Activated B cell treated with CpG ODN at 0.5 μM for 24 hours (primary cell): ENCODE measurements at regions of chr9 and their contacts with region 1.

Region 1: GRCh38 chr9:2066312-2067273 is 51.4 kb downstream of the SMARCA2 start:
- DNase-seq: no peak
- ATAC-seq: no peak
- H3K4me3 Mint-ChIP-seq: no peak overlapping the region
- H3K27ac Mint-ChIP-seq: no peak overlapping the region
- H3K4me1 Mint-ChIP-seq: no peaks in the 10 kb centered on the region
- H3K27me3 Mint-ChIP-seq: no peaks in the 10 kb centered on the region
- CTCF ChIP-seq: no peak

Region 2: DNA sequence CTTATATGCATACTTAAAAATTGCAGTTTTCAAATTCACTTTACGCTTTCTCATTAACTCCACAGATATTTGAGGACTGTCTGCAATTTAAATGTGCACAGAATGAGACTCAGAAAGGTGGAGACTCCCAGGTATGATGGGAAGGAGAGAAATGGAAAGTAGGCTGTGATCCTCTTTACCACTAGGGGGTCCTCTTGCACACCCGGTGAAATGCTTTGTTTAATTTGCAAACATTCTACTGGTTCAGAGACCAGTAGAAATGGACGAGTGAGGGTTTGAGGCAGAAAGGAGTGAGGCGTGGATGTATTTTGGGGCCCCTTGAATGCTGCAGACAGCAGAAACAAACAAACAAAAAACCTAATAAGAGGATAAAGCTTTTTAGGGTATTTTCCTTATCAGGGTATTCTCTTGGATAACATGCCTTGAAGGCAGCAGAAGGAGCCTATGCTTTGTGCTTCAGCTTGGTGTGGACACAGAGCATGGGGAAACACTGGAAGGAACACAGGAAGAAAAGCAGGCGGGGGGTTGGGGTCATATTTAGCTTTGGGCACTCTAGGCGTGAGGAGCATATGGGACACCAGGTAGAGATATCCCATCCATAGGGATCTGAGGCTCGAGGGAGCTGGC is 606.3 kb before region 1 on chr9:
- CTCF ChIA-PET with region 1: no interaction called
- POLR2A ChIA-PET with region 1: no interaction called
- intact Hi-C with region 1: loop called (anchors 5 kb)
- DNase-seq: no peak
- ATAC-seq: no peak
- H3K4me3 Mint-ChIP-seq: no peak overlapping the region
- H3K27ac Mint-ChIP-seq: no peak overlapping the region
- H3K4me1 Mint-ChIP-seq: no peaks in the 10 kb centered on the region
- H3K27me3 Mint-ChIP-seq: peaks cover 4% of the 10 kb centered on the region
- CTCF ChIP-seq: no peak

Region 3: GRCh38 chr9:1709345-1709744 is 357.2 kb before region 1 on chr9:
- CTCF ChIA-PET with region 1: interaction called, 3 read pairs
- POLR2A ChIA-PET with region 1: no interaction called
- intact Hi-C with region 1: loop called (anchors 1 kb)
- DNase-seq: no peak
- ATAC-seq: no peak
- H3K4me3 Mint-ChIP-seq: no peak overlapping the region
- H3K27ac Mint-ChIP-seq: no peak overlapping the region
- H3K4me1 Mint-ChIP-seq: no peaks in the 10 kb centered on the region
- H3K27me3 Mint-ChIP-seq: peaks cover 4% of the 10 kb centered on the region
- CTCF ChIP-seq: no peak

Region 4: DNA sequence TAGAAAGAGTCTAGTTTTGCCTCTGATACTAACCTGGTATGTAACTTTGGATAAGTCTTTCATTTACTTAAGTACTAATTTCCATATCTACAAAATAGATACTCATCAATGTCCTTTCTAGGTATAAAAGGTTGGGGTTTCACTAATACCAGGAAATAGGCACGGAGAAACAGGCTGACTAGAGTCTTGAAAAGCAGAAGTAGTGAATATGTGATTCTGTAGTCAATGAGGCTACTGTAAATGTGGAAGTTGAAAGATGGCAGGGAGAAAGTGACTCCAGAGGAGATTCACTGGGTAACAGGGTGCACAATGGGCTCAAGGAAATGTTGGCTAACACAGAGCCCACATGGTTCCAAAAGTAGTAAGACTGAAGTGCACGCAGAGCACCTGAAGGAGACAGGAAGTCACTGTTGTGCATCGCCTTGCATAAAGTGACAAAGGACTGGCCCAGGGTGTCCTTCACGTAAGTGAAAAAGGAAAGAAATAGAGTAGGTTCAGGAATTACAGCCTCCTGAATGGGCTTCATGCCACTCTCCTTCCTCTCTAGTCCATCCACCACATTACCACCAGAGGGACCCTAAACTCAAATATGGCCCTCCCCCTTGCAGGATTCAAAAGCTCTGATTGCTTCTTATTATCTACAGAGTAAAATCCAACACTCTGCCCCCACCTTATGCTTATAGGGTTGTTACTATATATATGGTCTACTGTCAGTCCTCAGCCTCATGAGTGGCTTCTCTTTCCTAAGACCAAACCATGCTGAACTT is 339.4 kb before region 1 on chr9:
- CTCF ChIA-PET with region 1: interaction called, 3 read pairs
- POLR2A ChIA-PET with region 1: no interaction called
- intact Hi-C with region 1: loop called (anchors 1 kb)
- DNase-seq: no peak
- ATAC-seq: no peak
- H3K4me3 Mint-ChIP-seq: no peak overlapping the region
- H3K27ac Mint-ChIP-seq: no peak overlapping the region
- H3K4me1 Mint-ChIP-seq: no peaks in the 10 kb centered on the region
- H3K27me3 Mint-ChIP-seq: peaks cover 3% of the 10 kb centered on the region
- CTCF ChIP-seq: no peak

Region 5: DNA sequence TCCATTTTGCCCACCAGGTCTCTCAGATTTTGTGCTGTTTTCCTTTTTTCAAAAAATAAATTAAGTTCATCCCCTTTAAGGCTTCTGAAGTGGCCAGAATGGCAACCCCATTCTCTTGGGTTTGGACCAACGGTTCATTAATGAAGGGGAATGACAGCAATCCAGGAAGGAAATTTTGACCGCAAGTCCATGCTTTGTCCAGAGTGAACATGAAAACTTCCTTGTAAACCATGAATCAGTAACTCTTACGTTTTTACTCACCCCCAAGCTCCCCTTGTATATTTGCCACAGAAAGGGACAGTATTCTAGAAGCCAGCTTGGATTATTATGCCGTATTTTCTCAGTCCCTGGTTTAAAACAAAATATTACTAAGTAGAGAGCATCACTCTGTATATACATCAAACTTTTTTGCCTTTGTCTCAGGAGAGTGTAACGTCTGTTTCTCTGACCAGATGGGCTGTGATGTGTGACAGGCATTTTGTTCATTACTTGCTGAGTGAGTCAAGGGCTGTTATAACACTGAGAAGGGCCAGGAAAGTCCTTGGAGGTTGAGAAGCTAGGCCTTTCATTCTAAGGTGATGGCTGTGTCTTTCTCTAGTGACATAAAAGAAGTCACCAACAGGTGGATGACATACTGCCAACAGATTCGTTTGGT is 96.8 kb after region 1 on chr9:
- CTCF ChIA-PET with region 1: no interaction called
- POLR2A ChIA-PET with region 1: no interaction called
- intact Hi-C with region 1: no loop called
- DNase-seq: no peak
- ATAC-seq: no peak
- H3K4me3 Mint-ChIP-seq: no peak overlapping the region
- H3K27ac Mint-ChIP-seq: no peak overlapping the region
- H3K4me1 Mint-ChIP-seq: peaks cover 33% of the 10 kb centered on the region
- H3K27me3 Mint-ChIP-seq: no peaks in the 10 kb centered on the region
- CTCF ChIP-seq: no peak